Activated CD4-positive, alpha-beta T cell treated with anti-CD3 and anti-CD28 coated beads for 36 hours (primary cell): ENCODE measurements at regions of chr1 and their contacts with region 1.

Region 1: GRCh38 chr1:164786980-164787833 is 228.2 kb downstream of the PBX1 start:
- DNase-seq: peak; percentile 74
- ATAC-seq: peak; percentile 68
- H3K4me3 Mint-ChIP-seq: no peak overlapping the region
- H3K27ac Mint-ChIP-seq: no peak overlapping the region
- H3K4me1 Mint-ChIP-seq: peaks cover 4% of the 10 kb centered on the region
- H3K27me3 Mint-ChIP-seq: peaks cover 6% of the 10 kb centered on the region

Region 2: DNA sequence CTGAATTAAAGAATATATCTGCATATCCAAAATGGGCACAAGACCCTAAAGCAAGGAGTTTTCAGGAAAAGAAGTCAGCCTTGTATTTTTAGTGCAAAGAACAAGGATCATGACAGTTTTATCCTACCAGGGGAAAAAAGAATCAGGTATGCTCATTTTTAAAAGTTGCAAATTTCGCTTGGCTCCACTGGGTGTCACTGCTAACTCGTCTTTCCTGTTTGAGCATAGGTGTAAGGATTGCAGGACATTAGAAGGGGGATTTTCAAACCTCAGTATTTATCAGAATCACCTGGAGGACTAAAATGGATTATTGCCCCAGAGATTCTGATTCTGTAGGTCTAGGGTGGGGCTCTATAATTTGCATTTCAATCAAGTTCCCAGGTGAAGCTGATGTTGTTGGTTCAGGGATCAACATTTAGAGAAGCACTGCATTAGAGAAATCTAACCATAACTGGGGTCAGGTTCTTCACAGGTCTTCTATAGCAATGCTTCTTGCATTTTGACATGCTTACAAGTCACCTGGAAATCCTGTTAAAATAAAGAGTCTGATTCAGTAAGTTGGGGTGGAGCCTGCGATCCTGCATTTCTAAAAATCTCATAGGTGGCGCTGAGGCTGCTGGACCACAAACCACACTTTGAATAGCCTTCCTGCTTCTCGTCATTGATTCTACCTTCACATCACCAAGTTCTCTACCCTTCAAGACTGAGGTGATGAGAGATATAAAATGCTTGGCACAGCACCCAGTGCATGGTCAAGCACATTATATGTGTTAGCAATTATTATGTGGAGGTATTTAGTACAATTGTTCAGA is 1425.9 kb before region 1 on chr1:
- CTCF ChIA-PET with region 1: no interaction called
- POLR2A ChIA-PET with region 1: no interaction called
- intact Hi-C with region 1: loop called in 1 of 2 experiments (anchors 5 kb)
- DNase-seq: peak; percentile 11
- ATAC-seq: no peak
- H3K4me3 Mint-ChIP-seq: no peak overlapping the region
- H3K27ac Mint-ChIP-seq: no peak overlapping the region
- H3K4me1 Mint-ChIP-seq: peaks cover 2% of the 10 kb centered on the region
- H3K27me3 Mint-ChIP-seq: peaks cover 7% of the 10 kb centered on the region

Region 3: GRCh38 chr1:163410073-163410999 is 1376.9 kb before region 1 on chr1:
- CTCF ChIA-PET with region 1: interaction called, 5 read pairs
- POLR2A ChIA-PET with region 1: no interaction called
- intact Hi-C with region 1: loop called (anchors 1 to 2 kb)
- DNase-seq: peak; percentile 56
- ATAC-seq: no peak
- H3K4me3 Mint-ChIP-seq: no peak overlapping the region
- H3K27ac Mint-ChIP-seq: no peak overlapping the region
- H3K4me1 Mint-ChIP-seq: peaks cover 2% of the 10 kb centered on the region
- H3K27me3 Mint-ChIP-seq: peaks cover 14% of the 10 kb centered on the region

Region 4: GRCh38 chr1:163528710-163529348 is 1258.4 kb before region 1 on chr1:
- CTCF ChIA-PET with region 1: no interaction called
- POLR2A ChIA-PET with region 1: no interaction called
- intact Hi-C with region 1: loop called in 1 of 2 experiments (anchors 1 kb)
- DNase-seq: peak; percentile 36
- ATAC-seq: no peak
- H3K4me3 Mint-ChIP-seq: no peak overlapping the region
- H3K27ac Mint-ChIP-seq: no peak overlapping the region
- H3K4me1 Mint-ChIP-seq: no peaks in the 10 kb centered on the region
- H3K27me3 Mint-ChIP-seq: peaks cover 4% of the 10 kb centered on the region

Region 5: GRCh38 chr1:164092603-164093353 is 694.4 kb before region 1 on chr1:
- CTCF ChIA-PET with region 1: no interaction called
- POLR2A ChIA-PET with region 1: no interaction called
- intact Hi-C with region 1: loop called in 1 of 2 experiments (anchors 5 kb)
- DNase-seq: peak; percentile 44
- ATAC-seq: no peak
- H3K4me3 Mint-ChIP-seq: no peak overlapping the region
- H3K27ac Mint-ChIP-seq: no peak overlapping the region
- H3K4me1 Mint-ChIP-seq: no peaks in the 10 kb centered on the region
- H3K27me3 Mint-ChIP-seq: no peaks in the 10 kb centered on the region

Region 6: DNA sequence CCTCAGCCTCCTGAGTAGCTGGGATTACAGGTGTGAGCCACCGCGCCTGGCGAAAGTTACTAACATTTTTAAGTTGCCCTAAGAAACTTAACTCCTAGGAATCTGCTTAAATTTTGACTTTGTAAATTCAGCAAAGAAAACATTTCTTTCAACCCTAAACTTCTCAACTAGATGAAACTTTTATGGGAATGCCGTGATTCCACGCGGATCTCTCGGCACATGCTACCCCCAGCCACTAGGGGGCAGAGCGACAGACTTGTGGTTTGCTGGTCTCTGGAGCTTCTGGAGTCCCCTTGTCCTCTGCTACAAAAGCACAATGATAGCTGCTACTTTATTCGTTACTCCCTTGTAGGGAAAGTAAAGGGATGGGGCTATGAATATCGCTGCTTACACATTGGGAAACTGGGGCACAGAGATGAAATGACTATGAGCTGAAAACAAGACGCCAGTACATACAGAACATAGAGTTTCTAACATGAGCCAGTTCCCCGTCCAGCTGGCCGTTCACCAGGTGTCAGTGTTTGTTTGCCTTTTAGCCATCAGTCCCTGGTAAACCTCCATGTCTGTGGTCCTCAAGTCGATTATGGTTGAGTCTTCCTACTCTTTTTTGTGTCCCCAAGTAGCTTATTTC is 113.5 kb before region 1 on chr1:
- CTCF ChIA-PET with region 1: no interaction called
- POLR2A ChIA-PET with region 1: no interaction called
- intact Hi-C with region 1: loop called in 1 of 2 experiments (anchors 10 kb)
- DNase-seq: no peak
- ATAC-seq: no peak
- H3K4me3 Mint-ChIP-seq: no peak overlapping the region
- H3K27ac Mint-ChIP-seq: no peak overlapping the region
- H3K4me1 Mint-ChIP-seq: peaks cover 2% of the 10 kb centered on the region
- H3K27me3 Mint-ChIP-seq: no peaks in the 10 kb centered on the region

Region 7: GRCh38 chr1:164891612-164892011 is 104.4 kb after region 1 on chr1:
- CTCF ChIA-PET with region 1: no interaction called
- POLR2A ChIA-PET with region 1: no interaction called
- intact Hi-C with region 1: no loop called
- DNase-seq: no peak
- ATAC-seq: no peak
- H3K4me3 Mint-ChIP-seq: no peak overlapping the region
- H3K27ac Mint-ChIP-seq: no peak overlapping the region
- H3K4me1 Mint-ChIP-seq: no peaks in the 10 kb centered on the region
- H3K27me3 Mint-ChIP-seq: peaks cover 2% of the 10 kb centered on the region